A673 (cell line): ENCODE measurements at regions of chr1 and their contacts with region 1.

Region 1: DNA sequence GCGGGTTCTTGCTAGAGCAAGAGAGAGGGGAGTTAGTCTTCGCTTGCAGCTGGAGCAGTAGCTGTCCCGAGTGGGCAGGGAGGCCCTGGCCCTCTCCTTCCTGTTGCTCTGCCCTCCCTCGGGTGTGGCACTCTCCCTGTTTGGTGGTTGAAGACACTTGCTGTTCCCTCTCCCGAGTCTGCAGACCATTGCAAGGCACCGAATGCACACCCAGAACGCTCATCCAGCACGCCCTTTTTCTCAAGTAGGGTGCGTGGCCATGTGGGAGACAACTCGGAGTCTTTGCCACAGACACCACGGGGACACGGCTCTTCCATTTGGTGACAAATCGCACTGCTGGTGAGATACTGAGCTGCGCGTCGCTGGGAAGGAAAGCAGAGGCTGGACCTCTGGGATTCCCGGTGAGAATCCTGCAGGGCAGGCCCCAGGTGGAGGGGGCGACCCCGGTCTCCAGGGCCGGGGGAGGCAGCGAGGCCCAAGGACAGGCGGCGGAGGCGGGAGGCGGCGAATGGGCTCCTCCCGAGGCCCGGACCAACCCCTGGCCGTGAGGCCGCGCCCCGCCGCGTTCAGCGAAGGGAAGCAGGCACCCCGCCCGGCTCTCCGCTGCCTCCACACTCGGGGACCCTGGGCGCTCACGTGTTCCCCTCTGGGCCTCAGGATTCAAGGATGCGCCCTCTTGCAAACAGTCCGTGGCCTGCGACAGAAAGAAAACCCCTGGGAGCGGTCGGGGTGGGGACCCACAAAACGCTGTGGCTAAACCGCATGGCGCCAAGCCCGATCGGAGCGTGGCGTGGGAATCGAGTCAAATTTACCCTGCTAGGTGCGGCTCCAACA is 10.4 kb upstream of the TMEM200B start:
- DNase-seq: no peak
- H3K4me3 ChIP-seq: no peak overlapping the region
- H3K27ac ChIP-seq: no peak overlapping the region
- H3K4me1 ChIP-seq: peaks cover 15% of the 10 kb centered on the region
- H3K27me3 ChIP-seq: no peaks in the 10 kb centered on the region
- CTCF ChIP-seq: no peak

Region 2: GRCh38 chr1:27760426-27760825 is 1373.7 kb before region 1 on chr1:
- CTCF ChIA-PET with region 1: no interaction called
- POLR2A ChIA-PET with region 1: interaction called, 11 read pairs
- intact Hi-C with region 1: no loop called
- DNase-seq: no peak
- H3K4me3 ChIP-seq: no peak overlapping the region
- H3K27ac ChIP-seq: no peak overlapping the region
- H3K4me1 ChIP-seq: no peaks in the 10 kb centered on the region
- H3K27me3 ChIP-seq: no peaks in the 10 kb centered on the region
- CTCF ChIP-seq: no peak

Region 3: DNA sequence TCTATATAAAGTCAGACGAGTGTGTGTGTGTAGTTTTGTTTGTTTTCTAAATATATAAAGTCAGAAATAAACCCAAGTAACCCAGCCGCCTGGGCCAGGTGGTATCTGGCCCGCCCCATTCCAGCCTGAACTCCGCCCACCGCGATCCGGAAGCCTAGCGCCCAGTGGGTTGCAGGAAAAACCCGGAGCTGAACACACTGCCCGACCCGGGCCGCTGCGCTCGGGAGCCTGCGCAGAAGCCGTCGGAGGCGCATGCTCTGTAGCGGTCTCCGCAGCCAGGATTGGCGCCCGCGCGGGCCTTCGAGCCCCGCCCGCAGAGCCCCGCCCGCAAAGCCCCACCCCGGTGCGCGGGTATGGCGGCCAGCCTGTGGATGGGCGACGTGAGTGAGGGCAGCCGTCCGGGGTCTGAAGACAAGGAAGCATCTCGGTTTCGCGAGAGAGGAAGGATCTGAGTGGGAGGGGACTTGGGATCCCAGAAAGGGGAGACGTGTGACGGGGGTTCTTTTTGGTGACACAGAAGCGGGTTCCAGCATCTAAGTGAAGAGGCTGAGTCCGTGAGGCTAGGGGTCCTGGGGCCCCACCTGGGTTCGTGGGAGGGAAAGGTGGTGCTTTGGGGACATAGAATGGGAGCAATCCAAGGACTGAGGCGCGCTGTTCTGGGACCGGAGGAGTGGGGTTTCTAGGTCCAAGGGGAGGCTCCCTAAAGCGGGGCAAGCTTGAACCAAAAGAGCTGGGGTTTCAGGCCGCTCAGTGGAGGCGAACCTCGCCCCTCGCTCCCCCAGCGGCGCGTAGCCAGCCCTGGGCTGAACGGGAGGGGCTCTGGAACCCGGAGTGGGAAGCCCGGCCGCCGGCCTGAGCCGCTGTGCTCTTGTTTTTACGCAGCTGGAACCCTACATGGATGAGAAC is 581.1 kb before region 1 on chr1 and contains the start of gene TRNAU1AP:
- CTCF ChIA-PET with region 1: no interaction called
- POLR2A ChIA-PET with region 1: interaction called, 14 read pairs
- intact Hi-C with region 1: no loop called
- DNase-seq: peak; percentile 98
- H3K4me3 ChIP-seq: peak within 1 kb of the TSS; percentile 91
- H3K27ac ChIP-seq: peak within 1 kb of the TSS; percentile 71
- H3K4me1 ChIP-seq: peaks cover 12% of the 10 kb centered on the region
- H3K27me3 ChIP-seq: no peaks in the 10 kb centered on the region
- CTCF ChIP-seq: no peak
- total RNA-seq, gene TRNAU1AP: 33.8 and 38.8 TPM in 2 replicates

Region 4: GRCh38 chr1:29043274-29043965 is 90.7 kb before region 1 on chr1:
- CTCF ChIA-PET with region 1: no interaction called
- POLR2A ChIA-PET with region 1: no interaction called
- intact Hi-C with region 1: no loop called
- DNase-seq: no peak
- H3K4me3 ChIP-seq: no peak overlapping the region
- H3K27ac ChIP-seq: peak overlapping the region; percentile 40
- H3K4me1 ChIP-seq: peaks cover 4% of the 10 kb centered on the region
- H3K27me3 ChIP-seq: no peaks in the 10 kb centered on the region
- CTCF ChIP-seq: no peak

Region 5: GRCh38 chr1:29210278-29211085 is 76.4 kb after region 1 on chr1:
- CTCF ChIA-PET with region 1: no interaction called
- POLR2A ChIA-PET with region 1: no interaction called
- intact Hi-C with region 1: no loop called
- DNase-seq: no peak
- H3K4me3 ChIP-seq: no peak overlapping the region
- H3K27ac ChIP-seq: no peak overlapping the region
- H3K4me1 ChIP-seq: no peaks in the 10 kb centered on the region
- H3K27me3 ChIP-seq: no peaks in the 10 kb centered on the region
- CTCF ChIP-seq: no peak